RWPE1 (cell line): ENCODE measurements at regions of chr6 and their contacts with region 1.

Region 1: GRCh38 chr6:73675466-73676098 is 20.4 kb upstream of the CD109 start:
- DNase-seq: peak; percentile 63
- H3K27ac ChIP-seq: no peak overlapping the region
- CTCF ChIP-seq: peak; percentile 89

Region 2: GRCh38 chr6:73732845-73733675 is 57.5 kb after region 1 on chr6:
- CTCF ChIA-PET with region 1: interaction called, 29 read pairs
- POLR2A ChIA-PET with region 1: no interaction called
- DNase-seq: peak; percentile 64
- H3K27ac ChIP-seq: no peak overlapping the region
- CTCF ChIP-seq: peak; percentile 89